Activated naive CD4-positive, alpha-beta T cell treated with anti-CD3 and anti-CD28 coated beads for 36 hours (primary cell): ENCODE measurements at regions of chr14 and their contacts with region 1.

Region 1: GRCh38 chr14:20662968-20663732 is 21.2 kb upstream of the RNASE4 start:
- DNase-seq: peak; percentile 94
- H3K4me3 Mint-ChIP-seq: peak overlapping the region; percentile 83
- H3K27ac Mint-ChIP-seq: peak overlapping the region; percentile 79
- H3K4me1 Mint-ChIP-seq: peaks cover 16% of the 10 kb centered on the region
- H3K27me3 Mint-ChIP-seq: peaks cover 8% of the 10 kb centered on the region

Region 2: GRCh38 chr14:20624495-20625070 is 38.6 kb before region 1 on chr14:
- CTCF ChIA-PET with region 1: interaction called, 5 read pairs
- intact Hi-C with region 1: loop called (anchors 2 kb)
- DNase-seq: peak; percentile 70
- H3K4me3 Mint-ChIP-seq: peak overlapping the region; percentile 76
- H3K27ac Mint-ChIP-seq: peak overlapping the region; percentile 75
- H3K4me1 Mint-ChIP-seq: peaks cover 65% of the 10 kb centered on the region
- H3K27me3 Mint-ChIP-seq: peaks cover 21% of the 10 kb centered on the region

Region 3: GRCh38 chr14:20632682-20633428 is 30.3 kb before region 1 on chr14:
- CTCF ChIA-PET with region 1: interaction called, 4 read pairs
- intact Hi-C with region 1: loop called (anchors 1 kb)
- DNase-seq: peak; percentile 83
- H3K4me3 Mint-ChIP-seq: peak overlapping the region; percentile 79
- H3K27ac Mint-ChIP-seq: peak overlapping the region; percentile 89
- H3K4me1 Mint-ChIP-seq: peaks cover 35% of the 10 kb centered on the region
- H3K27me3 Mint-ChIP-seq: peaks cover 34% of the 10 kb centered on the region

Region 4: DNA sequence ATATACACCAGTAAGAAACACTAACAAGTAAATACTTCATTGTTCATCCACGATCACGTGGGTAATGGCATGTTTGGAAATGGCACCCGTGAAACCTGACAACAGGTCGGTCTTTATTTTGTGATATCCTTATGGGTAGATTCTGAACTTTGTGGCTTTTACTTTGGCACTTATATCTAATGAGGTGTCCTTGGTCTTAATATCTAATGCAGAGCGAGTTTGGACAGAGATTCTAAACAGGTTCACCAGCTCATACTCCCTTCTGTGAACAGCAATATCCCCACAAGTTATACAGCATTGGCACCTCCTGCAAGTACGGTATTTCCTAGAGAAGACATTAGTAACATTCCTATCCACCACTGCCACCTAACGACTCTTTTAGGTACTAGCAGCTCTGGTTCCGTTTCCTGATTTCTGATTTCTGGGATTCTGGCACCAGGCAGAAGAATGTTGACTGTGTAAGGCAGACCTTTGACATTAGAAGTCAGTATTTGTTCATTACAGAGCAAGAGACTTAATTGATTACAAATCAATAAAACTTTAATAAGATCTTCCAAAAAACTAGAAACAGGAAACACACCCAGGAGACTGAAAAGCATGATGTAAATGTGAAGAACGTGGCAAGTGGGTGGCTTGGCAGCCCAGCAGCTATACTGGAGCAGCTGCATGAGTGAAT is 27.8 kb after region 1 on chr14:
- CTCF ChIA-PET with region 1: interaction called, 96 read pairs
- intact Hi-C with region 1: loop called (anchors 1 kb)
- DNase-seq: peak; percentile 60
- H3K4me3 Mint-ChIP-seq: no peak overlapping the region
- H3K27ac Mint-ChIP-seq: no peak overlapping the region
- H3K4me1 Mint-ChIP-seq: peaks cover 3% of the 10 kb centered on the region
- H3K27me3 Mint-ChIP-seq: no peaks in the 10 kb centered on the region

Region 5: GRCh38 chr14:20873370-20874177 is 210.4 kb after region 1 on chr14:
- CTCF ChIA-PET with region 1: no interaction called
- intact Hi-C with region 1: loop called (anchors 1 kb)
- DNase-seq: peak; percentile 93
- H3K4me3 Mint-ChIP-seq: peak overlapping the region; percentile 34
- H3K27ac Mint-ChIP-seq: no peak overlapping the region
- H3K4me1 Mint-ChIP-seq: peaks cover 10% of the 10 kb centered on the region
- H3K27me3 Mint-ChIP-seq: peaks cover 6% of the 10 kb centered on the region